MCF 10A (cell line): ENCODE measurements at regions of chr9 and their contacts with region 1.

Region 1: DNA sequence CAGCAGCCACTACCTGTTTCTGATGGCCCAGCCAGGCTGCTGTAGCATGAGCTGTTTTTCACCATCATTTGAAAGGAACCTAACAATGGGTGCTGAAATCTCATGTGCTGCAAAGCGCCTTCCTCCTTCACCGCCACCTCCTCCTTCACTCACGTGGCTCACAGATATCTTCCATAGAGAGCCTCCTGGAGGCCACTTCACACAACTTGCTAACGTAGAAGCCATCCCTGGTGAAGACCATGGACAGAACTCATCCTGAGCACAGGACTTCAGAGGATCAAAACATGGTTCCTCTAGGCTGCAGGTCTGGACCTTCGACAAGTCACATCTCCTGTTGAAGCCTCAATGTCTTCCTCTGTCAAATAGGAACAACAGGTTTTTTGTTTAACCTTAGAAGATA is 155.5 kb upstream of the RAD23B start:
- DNase-seq: no peak
- H3K4me3 Mint-ChIP-seq: no peak overlapping the region
- H3K27ac Mint-ChIP-seq: no peak overlapping the region
- H3K4me1 Mint-ChIP-seq: no peaks in the 10 kb centered on the region
- H3K27me3 Mint-ChIP-seq: no peaks in the 10 kb centered on the region
- CTCF ChIP-seq: no peak

Region 2: DNA sequence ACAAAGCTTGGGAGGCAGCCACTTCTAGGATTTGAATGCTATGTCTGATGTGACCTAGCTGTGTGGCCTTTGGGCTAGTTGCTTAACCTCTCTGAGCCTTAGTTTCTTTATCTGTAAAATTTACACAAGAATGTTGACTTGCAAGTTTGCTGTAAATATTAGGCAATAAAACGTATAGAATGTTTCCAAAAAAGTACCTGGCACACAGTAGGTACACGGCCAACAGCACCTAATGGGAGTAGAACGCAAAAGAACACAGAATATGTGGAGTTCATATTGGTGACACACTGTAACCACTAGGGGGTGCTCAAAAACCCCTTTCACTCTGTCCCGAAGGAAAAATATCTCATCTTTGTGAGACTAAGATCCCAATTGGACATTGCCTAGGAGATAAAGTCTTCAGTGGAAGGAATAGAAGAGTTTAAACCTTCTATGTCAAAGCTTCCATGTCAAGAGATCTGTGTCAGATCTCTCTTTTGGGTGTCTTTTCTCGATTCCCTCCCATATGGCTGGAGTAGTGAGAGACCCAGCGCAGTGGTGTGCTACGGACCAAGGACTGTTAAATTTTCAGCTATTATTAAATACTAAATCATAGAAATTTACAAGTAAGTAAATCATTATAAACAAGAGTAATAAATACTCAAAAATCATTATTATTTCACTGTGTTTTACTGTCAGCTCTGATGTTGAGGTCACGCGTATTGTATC is 10.0 kb after region 1 on chr9:
- CTCF ChIA-PET with region 1: interaction called, 32 read pairs
- POLR2A ChIA-PET with region 1: interaction called, 3 read pairs
- intact Hi-C with region 1: no loop called
- DNase-seq: peak; percentile 59
- H3K4me3 Mint-ChIP-seq: no peak overlapping the region
- H3K27ac Mint-ChIP-seq: no peak overlapping the region
- H3K4me1 Mint-ChIP-seq: no peaks in the 10 kb centered on the region
- H3K27me3 Mint-ChIP-seq: peaks cover 33% of the 10 kb centered on the region
- CTCF ChIP-seq: peak; percentile 71

Region 3: GRCh38 chr9:107158321-107158720 is 30.7 kb after region 1 on chr9:
- CTCF ChIA-PET with region 1: no interaction called
- POLR2A ChIA-PET with region 1: no interaction called
- intact Hi-C with region 1: no loop called
- DNase-seq: peak; percentile 36
- H3K4me3 Mint-ChIP-seq: no peak overlapping the region
- H3K27ac Mint-ChIP-seq: no peak overlapping the region
- H3K4me1 Mint-ChIP-seq: peaks cover 4% of the 10 kb centered on the region
- H3K27me3 Mint-ChIP-seq: peaks cover 18% of the 10 kb centered on the region
- CTCF ChIP-seq: peak; percentile 29

Region 4: GRCh38 chr9:107587191-107587963 is 459.8 kb after region 1 on chr9:
- CTCF ChIA-PET with region 1: no interaction called
- POLR2A ChIA-PET with region 1: no interaction called
- intact Hi-C with region 1: no loop called
- DNase-seq: no peak
- H3K4me3 Mint-ChIP-seq: no peak overlapping the region
- H3K27ac Mint-ChIP-seq: no peak overlapping the region
- H3K4me1 Mint-ChIP-seq: no peaks in the 10 kb centered on the region
- H3K27me3 Mint-ChIP-seq: no peaks in the 10 kb centered on the region
- CTCF ChIP-seq: no peak